Ovary (tissue), 10 donors: ENCODE measurements at regions of chr17 and their contacts with region 1.

Region 1: GRCh38 chr17:79839363-79840268 is at the start of gene CBX4:
- DNase-seq: peak; percentile 95 to 96 (median 96)
- H3K4me3 ChIP-seq: peak within 1 kb of the TSS; percentile 63
- H3K27ac ChIP-seq: peak within 1 kb of the TSS; percentile 87 to 92
- H3K4me1 ChIP-seq: peaks cover 24% of the 10 kb centered on the region
- H3K27me3 ChIP-seq: no peaks in the 10 kb centered on the region
- CTCF ChIP-seq: peak; percentile 62 to 86 (median 74)
- EP300 ChIP-seq: no peak
- POLR2A ChIP-seq: peak; percentile 49
- total RNA-seq, gene CBX4: 5.5 to 27.9 (median 16.5) TPM

Region 2: GRCh38 chr17:79970576-79971068 is 131.0 kb after region 1 on chr17:
- intact Hi-C with region 1: loop called in 1 of 4 experiments (anchors 10 kb)
- DNase-seq: peak in 1 of 5 donors; percentile 6
- H3K4me3 ChIP-seq: no peak overlapping the region
- H3K27ac ChIP-seq: no peak overlapping the region
- H3K4me1 ChIP-seq: no peaks in the 10 kb centered on the region
- H3K27me3 ChIP-seq: no peaks in the 10 kb centered on the region
- CTCF ChIP-seq: no peak
- EP300 ChIP-seq: no peak
- POLR2A ChIP-seq: no peak